ENCODE measurements at regions of chr21 and their contacts with region 1.

Region 1: GRCh38 chr21:45074818-45075595 is 627 bp downstream of the ADARB1 start:
- DNase-seq: peak; percentile 22
- H3K4me3 Mint-ChIP-seq: peak overlapping the region; percentile 81
- H3K27ac Mint-ChIP-seq: no peak overlapping the region
- H3K4me1 Mint-ChIP-seq: peaks cover 48% of the 10 kb centered on the region
- H3K27me3 Mint-ChIP-seq: no peaks in the 10 kb centered on the region

Region 2: GRCh38 chr21:44920694-44921604 is 154.1 kb before region 1 on chr21 and contains the start of gene ITGB2:
- intact Hi-C with region 1: loop called (anchors 5 kb)
- DNase-seq: peak; percentile 50
- H3K4me3 Mint-ChIP-seq: peak within 1 kb of the TSS; percentile 97
- H3K27ac Mint-ChIP-seq: peak within 1 kb of the TSS; percentile 90
- H3K4me1 Mint-ChIP-seq: peaks cover 59% of the 10 kb centered on the region
- H3K27me3 Mint-ChIP-seq: no peaks in the 10 kb centered on the region
- total RNA-seq, gene ITGB2: 210 and 212 TPM in 2 replicates

Region 3: GRCh38 chr21:45087022-45087823 is 12.2 kb after region 1 on chr21:
- intact Hi-C with region 1: loop called (anchors 1 kb)
- DNase-seq: no peak
- H3K4me3 Mint-ChIP-seq: peak overlapping the region; percentile 56
- H3K27ac Mint-ChIP-seq: peak overlapping the region; percentile 77
- H3K4me1 Mint-ChIP-seq: peaks cover 80% of the 10 kb centered on the region
- H3K27me3 Mint-ChIP-seq: no peaks in the 10 kb centered on the region

Region 4: GRCh38 chr21:45109831-45110492 is 35.0 kb after region 1 on chr21:
- intact Hi-C with region 1: loop called (anchors 2 kb)
- DNase-seq: peak; percentile 24
- H3K4me3 Mint-ChIP-seq: peak overlapping the region; percentile 75
- H3K27ac Mint-ChIP-seq: peak overlapping the region; percentile 44
- H3K4me1 Mint-ChIP-seq: peaks cover 66% of the 10 kb centered on the region
- H3K27me3 Mint-ChIP-seq: no peaks in the 10 kb centered on the region

Region 5: GRCh38 chr21:45129189-45129923 is 54.3 kb after region 1 on chr21:
- intact Hi-C with region 1: loop called (anchors 5 kb)
- DNase-seq: no peak
- H3K4me3 Mint-ChIP-seq: no peak overlapping the region
- H3K27ac Mint-ChIP-seq: no peak overlapping the region
- H3K4me1 Mint-ChIP-seq: peaks cover 14% of the 10 kb centered on the region
- H3K27me3 Mint-ChIP-seq: no peaks in the 10 kb centered on the region

Measured in activated T-helper 2 cell treated with anti-CD3 and anti-CD28 coated beads, Interferon-gamma antibody, Interleukin-2, Interleukin-4, amounts not matched to agents 10 μg/mL and 5 μg/mL and 100 μg/mL, durations not matched to agents 14 hours and 24 hours and 36 hours (primary cell).